ENCODE measurements at regions of chr5 and their contacts with region 1.

Region 1: GRCh38 chr5:67315082-67315989 is 118.7 kb upstream of the CD180 start:
- DNase-seq: peak; percentile 48 to 96 (median 77)

Region 2: GRCh38 chr5:67268231-67269021 is 46.9 kb before region 1 on chr5:
- intact Hi-C with region 1: loop called (anchors 2 kb)
- DNase-seq: peak; percentile 34 to 94 (median 57)

Region 3: DNA sequence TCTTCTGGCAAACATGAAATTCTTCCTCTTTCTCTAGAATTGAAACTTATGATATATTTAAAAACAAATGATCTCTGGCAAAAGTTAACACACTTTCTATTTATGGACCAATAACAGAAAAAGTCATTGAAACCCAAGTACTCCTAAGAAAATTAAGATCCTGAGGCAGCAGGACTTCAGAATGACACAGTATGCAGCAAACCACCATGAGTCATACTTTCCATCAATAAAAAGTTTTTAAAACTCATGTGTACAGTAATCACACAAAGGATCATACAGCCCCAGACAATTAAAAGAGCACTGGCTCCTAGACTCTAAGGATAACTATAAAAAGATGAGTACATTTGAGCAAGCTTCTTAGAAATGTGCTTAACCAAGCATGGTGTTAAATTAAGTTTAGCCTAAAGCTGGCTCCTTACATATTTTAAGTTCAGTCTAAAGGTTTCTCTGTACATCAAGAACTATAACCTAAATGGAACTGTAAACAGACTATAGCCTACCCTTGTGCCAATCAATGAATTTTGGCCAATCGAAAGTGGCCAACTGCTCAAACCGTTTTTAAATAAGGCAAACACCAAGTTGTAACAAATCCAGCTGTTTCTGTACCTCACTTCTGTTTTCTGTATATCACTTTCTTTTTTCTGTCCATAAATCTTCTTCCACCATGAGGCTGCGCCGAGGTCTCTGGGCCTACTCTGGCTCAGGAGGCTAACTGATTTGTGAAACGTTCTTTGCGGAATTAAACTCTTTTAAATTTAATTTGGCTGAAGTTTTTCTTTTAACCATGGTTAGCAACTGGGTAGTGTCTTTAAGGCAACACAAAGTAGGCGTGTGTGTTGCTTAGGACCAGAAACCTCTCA is 668.1 kb after region 1 on chr5:
- intact Hi-C with region 1: no loop called
- DNase-seq: no peak